ENCODE measurements at regions of chr7 and their contacts with region 1.

Region 1: GRCh38 chr7:4753711-4754432 is 21.6 kb upstream of the AP5Z1 start:
- DNase-seq: peak; percentile 96
- H3K4me3 ChIP-seq: no peak overlapping the region
- H3K27ac ChIP-seq: peak overlapping the region in 1 of 8 donors; percentile 16
- H3K4me1 ChIP-seq: peaks cover 0 to 37% (median 16%) of the 10 kb centered on the region in 6 donors
- H3K27me3 ChIP-seq: no peaks in the 10 kb centered on the region
- CTCF ChIP-seq: peak; percentile 85 to 96 (median 90)
- POLR2A ChIP-seq: no peak

Region 2: DNA sequence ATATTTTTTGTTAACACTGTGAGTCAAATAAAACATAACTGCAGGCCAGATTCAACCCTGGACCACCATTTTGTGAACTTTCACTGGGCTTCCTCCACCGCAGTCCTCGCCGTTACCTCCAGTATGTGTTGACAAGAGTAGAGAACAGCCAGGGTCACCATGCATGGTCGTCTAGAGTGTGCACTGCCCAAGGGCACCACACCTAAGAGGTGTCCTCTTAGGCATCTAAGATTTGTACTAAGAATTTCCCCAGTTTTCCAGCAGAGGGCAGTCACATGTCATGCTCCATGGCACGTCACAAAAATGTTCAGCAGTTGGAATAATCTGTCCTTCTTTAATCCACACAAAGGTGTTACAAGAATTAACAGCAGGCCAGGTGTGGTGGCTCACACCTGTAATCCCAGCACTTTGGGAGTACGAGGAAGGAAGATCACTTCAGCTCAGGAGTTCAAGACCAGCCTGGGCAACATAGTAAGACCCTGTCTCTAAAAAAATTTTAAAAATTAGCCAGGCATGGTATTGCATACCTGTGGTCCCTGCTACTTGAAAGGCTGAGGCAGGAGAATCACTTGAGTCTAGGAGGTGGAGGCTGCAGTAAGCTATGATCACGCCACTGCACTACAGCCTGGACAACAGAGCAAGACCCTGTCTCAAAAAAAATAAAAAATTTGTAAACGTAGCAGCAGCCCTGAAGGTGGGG is 143.0 kb before region 1 on chr7:
- intact Hi-C with region 1: loop called (anchors 10 kb)
- DNase-seq: peak; percentile 71
- H3K4me3 ChIP-seq: no peak overlapping the region
- H3K27ac ChIP-seq: no peak overlapping the region
- H3K4me1 ChIP-seq: peaks cover 0 to 25% (median 21%) of the 10 kb centered on the region in 6 donors
- H3K27me3 ChIP-seq: peaks cover 0 to 3% (median 0%) of the 10 kb centered on the region in 7 donors
- CTCF ChIP-seq: peak; percentile 52 to 89 (median 81)
- POLR2A ChIP-seq: no peak